GM10248 (cell line): ENCODE measurements at regions of chr7 and their contacts with region 1.

Region 1: DNA sequence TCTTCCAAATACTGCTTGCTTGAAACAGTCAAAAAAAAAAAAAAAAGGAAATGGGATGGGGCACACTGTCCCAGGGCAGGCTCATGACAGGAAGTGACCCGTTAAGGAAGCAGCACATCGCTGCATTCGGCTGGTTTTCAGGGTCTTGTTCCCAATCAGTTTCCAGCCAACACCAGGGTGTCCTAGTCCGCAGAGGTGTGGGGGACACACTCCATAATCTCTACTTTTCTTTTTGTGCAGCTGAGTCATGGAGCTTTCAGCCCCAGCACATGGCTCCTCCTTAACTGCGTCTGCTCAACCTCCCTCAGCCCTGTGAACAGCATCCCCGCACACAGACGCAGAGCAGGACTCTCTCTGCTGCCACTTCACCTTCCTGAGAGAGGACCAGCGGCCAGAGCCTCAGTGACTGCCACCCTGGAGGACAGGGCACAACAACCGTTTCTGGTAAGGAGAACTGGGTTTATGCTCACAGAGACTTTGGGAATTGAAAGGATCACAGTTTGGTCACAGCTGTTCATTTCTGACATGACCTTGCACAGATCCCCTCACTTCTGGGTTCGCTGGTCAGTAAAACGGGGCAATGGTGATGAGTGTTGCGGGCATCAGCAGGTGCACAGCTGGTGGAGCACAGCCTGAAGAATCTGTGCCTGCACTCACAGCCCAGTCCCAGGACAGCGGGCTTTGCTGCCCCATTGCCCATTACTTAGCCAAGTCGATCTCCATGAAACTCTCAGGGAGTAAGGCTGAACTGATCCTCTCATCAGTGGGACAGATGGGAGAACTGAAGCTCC is at the start of gene GIMAP5:
- DNase-seq: no peak
- CTCF ChIP-seq: no peak

Region 2: DNA sequence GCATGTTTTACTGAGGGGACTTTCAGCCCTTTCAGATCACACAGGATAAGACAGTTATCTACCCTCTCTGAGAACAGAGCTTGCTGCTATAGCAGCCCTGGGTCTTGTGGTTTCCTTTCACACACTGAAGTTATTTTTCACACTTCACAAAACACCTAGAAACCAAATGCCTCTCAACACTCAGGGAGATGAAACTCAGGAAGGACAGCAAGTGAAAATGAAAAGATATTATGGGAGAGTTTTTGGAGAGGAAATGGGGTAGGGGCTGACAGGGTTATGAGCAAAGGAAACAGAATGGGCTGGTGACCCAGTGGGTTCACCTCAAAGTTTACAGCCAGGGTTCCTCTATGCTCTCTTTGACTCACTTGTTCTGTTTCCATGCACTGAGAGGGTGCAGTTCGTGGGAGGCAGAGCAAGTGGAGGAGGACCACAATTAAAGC is 69.0 kb before region 1 on chr7:
- CTCF ChIA-PET with region 1: no interaction called
- POLR2A ChIA-PET with region 1: no interaction called
- DNase-seq: peak; percentile 64
- CTCF ChIP-seq: no peak

Region 3: GRCh38 chr7:150748376-150748775 is 10.9 kb after region 1 on chr7:
- CTCF ChIA-PET with region 1: interaction called, 14 read pairs
- POLR2A ChIA-PET with region 1: no interaction called
- DNase-seq: no peak
- CTCF ChIP-seq: no peak

Region 4: DNA sequence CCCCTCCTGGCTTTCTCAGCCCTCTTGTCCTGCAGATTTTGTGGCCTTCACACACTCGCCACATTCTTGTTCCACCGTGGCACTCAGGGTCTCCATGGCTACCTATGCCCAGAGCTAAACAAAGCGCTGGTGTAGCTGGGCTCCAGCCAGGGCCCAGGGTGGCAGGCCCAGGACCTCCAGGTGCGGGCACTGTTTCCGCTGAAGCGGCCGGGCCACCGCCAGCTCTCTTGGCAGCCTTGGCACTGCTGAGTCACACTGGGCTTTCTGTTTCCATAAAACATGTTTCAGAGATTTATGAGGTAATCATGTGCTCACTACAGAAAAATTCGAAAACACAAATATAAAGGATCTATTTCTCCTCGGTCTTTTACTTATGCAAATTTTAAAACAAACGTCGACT is 166.1 kb after region 1 on chr7:
- CTCF ChIA-PET with region 1: no interaction called
- POLR2A ChIA-PET with region 1: no interaction called
- DNase-seq: peak; percentile 6
- CTCF ChIP-seq: no peak